Dendritic cell treated with granulocyte-macrophage colony-stimulating factor and Interleukin-4, amounts not matched to agents 40 ng/mL and 50 ng/mL, for 4 days (primary cell): ENCODE measurements at regions of chr19 and their contacts with region 1.

Region 1: DNA sequence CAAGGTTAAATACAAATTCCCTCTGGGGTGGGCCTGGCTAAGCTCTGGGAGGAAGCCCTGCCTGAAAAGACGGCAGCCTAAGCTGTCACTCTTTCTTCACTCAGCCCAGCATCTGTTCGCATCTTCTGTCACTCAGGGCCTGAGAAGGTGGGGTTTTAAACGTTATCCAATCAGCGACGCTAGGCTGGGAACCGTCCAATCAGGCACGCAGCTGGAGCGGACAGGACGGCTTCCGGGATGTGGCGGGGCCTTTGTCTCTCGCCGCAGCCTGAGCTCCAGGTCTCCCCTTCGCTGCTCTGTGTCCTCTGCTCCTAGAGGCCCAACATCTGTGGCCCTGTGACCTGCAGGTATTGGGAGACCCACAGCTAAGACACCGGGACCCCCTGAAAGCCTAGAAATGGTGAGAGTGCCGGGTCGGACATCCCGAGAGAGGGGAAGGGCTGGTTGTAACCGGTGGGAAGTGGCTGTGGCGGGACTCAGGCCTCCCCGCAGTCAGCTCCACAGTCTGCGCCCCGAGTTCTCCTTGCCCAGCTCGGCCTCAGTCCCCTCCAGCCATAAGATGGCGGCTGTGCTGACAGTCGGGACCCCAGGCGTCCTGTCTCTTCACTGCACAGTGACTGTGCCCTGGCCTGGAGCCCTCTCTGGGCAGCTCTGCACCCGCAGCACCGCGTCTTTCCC is at the start of gene ZNF431:
- H3K4me3 Mint-ChIP-seq: peak within 1 kb of the TSS; percentile 98
- H3K27ac Mint-ChIP-seq: peak within 1 kb of the TSS; percentile 97
- H3K4me1 Mint-ChIP-seq: peaks cover 14% of the 10 kb centered on the region
- H3K27me3 Mint-ChIP-seq: no peaks in the 10 kb centered on the region

Region 2: DNA sequence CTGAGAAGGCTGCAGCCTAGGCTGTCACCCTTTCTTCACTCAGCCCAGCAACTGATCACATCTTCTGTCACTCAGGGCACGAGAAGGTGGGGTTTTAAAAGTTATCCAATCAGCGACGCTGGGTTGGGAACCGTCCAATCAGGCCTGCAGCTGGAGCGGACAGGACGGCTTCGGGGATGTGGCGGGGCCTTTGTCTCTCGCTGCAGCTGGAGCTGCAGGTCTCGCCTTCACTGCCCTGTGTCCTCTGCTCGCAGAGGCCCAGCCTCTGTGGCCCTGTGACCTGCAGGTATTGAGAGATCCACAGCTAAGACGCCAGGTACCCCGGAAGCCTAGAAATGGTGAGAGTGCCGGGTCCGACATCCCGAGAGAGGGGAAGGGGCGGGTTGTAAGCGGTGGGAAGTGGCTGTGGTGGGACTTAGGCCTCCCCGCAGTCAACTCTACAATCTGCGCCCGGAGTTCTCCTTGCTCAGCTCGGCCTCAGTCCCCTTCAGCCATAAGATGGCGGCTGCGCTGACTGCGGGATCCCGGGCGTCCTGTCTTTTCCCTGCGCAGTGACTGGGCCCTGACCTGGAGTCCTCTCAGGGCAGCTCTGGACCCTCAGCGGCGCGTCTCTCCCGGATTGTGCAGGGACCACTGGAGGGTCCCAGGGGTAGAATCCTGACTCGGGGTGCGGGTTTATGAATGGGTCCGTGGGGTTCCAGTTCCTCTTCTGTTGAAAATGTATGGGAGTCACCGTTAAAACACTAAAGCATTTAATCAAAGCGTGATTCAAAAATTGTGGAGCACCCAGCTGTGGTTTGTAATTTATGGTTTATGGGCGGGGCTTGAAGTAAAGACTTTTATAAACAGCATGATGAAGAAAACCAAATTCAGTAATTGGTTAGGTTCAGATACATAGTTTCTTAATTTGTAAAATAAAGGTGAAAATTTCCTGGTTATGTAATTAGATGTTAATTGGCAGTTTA is 59.6 kb before region 1 on chr19 and contains the start of gene ZNF714:
- intact Hi-C with region 1: loop called (anchors 5 kb)
- H3K4me3 Mint-ChIP-seq: peak within 1 kb of the TSS; percentile 99
- H3K27ac Mint-ChIP-seq: peak within 1 kb of the TSS; percentile 99
- H3K4me1 Mint-ChIP-seq: peaks cover 11% of the 10 kb centered on the region
- H3K27me3 Mint-ChIP-seq: no peaks in the 10 kb centered on the region

Region 3: DNA sequence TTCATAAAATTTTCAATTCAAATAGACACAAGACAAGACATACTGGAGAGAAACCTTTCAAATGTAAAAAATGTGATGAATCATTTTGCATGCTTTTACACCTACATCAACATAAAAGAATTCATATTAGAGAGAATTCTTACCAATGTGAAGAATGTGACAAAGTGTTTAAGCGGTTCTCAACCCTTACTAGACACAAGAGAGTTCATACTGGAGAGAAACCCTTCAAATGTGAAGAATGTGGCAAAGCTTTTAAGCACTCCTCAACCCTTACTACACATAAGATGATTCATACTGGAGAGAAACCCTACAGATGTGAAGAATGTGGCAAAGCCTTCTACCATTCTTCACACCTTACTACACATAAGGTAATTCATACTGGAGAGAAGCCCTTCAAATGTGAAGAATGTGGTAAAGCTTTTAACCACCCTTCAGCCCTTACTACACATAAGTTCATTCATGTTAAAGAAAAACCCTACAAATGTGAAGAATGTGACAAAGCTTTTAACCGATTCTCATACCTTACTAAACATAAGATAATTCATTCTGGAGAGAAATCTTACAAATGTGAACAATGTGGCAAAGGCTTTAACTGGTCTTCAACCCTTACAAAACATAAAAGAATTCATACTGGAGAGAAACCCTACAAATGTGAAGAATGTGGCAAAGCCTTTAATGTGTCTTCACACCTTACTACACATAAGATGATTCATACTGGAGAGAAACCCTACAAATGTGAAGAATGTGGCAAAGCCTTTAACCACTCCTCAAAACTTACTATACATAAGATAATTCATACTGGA is 24.7 kb before region 1 on chr19:
- intact Hi-C with region 1: no loop called
- H3K4me3 Mint-ChIP-seq: no peak overlapping the region
- H3K27ac Mint-ChIP-seq: no peak overlapping the region
- H3K4me1 Mint-ChIP-seq: no peaks in the 10 kb centered on the region
- H3K27me3 Mint-ChIP-seq: no peaks in the 10 kb centered on the region

Region 4: DNA sequence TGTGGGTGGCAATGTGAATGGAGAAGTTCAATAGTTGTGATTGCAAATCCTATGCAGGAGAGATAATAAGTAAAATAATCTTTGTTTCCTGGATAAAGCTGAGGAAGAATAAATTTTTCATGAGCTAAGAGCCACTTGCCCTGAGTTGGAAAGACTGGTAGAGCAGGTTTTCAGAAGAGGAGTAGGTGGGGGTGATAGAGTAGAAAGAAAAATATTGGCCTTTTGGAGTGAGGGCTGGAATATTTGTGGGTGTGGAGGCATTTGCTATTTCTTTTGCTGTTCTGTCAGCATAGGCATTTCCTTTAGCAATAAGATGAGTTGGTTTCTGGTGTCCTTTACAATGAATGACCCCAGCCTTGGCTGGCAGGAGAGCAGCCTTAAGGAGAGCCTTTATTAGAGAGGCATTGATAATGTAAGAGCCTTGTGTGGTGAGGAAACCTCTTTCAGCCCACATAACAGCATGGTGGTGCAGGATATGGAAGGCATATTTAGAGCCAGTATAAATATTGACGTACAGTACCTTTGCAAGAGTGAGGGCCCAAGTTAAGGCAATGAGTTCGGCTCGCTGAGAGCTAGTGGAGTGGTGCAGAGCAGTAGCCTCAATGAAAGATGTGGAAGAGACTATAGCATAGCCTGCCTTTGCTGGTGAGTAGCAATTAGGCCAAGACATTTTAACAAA is 11.7 kb before region 1 on chr19:
- intact Hi-C with region 1: no loop called
- H3K4me3 Mint-ChIP-seq: no peak overlapping the region
- H3K27ac Mint-ChIP-seq: no peak overlapping the region
- H3K4me1 Mint-ChIP-seq: no peaks in the 10 kb centered on the region
- H3K27me3 Mint-ChIP-seq: no peaks in the 10 kb centered on the region

Region 5: GRCh38 chr19:21166436-21166835 is 24.5 kb after region 1 on chr19:
- intact Hi-C with region 1: no loop called
- H3K4me3 Mint-ChIP-seq: no peak overlapping the region
- H3K27ac Mint-ChIP-seq: no peak overlapping the region
- H3K4me1 Mint-ChIP-seq: no peaks in the 10 kb centered on the region
- H3K27me3 Mint-ChIP-seq: no peaks in the 10 kb centered on the region

Region 6: DNA sequence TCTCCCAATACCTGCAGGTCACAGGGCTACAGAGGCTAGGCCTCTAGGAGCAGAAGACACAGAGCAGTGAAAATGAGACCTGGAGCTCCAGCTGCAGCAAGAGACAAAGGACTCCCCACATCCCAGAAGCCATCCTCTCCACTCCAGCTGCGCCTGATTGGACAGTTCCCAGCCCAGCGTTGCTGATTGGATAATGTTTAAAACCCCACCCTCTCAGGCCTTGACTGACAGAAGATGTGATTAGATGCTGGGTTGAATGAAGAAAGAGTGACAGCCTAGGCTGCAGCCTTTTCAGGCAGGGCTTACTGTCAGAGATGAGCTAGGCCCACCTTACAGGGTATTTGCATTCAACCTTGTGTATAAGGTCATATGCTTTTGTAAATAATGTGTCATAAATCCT is 127.9 kb after region 1 on chr19:
- intact Hi-C with region 1: no loop called
- H3K4me3 Mint-ChIP-seq: no peak overlapping the region
- H3K27ac Mint-ChIP-seq: no peak overlapping the region
- H3K4me1 Mint-ChIP-seq: no peaks in the 10 kb centered on the region
- H3K27me3 Mint-ChIP-seq: no peaks in the 10 kb centered on the region